PC-3 (cell line): ENCODE measurements at regions of chr6 and their contacts with region 1.

Region 1: DNA sequence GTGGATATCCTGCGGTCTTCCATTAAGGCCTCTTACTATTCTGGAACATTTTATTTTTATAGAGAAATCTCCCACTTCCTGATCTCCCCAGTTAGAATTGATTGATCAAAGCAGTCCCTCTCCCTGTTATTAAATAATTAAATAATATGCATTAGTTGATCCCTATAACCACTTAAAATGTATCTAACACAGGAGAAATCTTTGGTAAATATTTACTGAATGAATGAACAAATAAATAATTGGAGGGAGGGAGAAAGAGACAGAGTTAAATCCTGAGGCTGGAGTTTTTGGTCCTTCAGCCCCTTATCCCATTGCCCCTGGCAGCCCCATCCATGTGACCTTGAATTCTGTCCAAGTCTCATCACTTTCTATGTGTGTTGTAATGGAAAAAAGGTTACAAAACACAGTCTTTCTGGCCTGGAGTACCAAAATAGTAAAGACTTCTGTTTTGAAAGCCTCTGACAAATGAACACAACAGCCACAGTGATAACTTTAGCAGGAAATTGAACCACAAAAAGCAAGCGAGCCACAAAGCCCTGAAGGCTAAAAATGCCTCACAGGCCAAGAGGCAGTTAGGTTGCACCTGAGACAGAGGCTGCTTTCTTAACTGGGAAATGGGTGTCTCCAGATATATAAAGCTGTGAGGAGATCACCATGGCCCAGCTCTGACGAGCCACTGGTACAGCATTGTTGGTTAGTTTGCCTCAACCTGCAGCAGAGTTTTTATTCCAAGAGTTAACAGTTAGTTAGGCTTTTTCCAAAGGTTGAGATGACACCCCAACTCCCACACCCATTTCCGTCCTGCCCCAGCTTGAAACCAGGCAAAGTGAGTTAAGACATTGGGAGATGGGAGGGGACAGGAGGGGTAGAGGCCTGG is 11.3 kb downstream of the NT5E start:
- DNase-seq: peak; percentile 68
- ATAC-seq: no peak
- H3K4me3 ChIP-seq: no peak overlapping the region
- H3K27ac ChIP-seq: peak overlapping the region; percentile 96
- H3K4me1 ChIP-seq: peaks cover 81% of the 10 kb centered on the region
- H3K27me3 ChIP-seq: no peaks in the 10 kb centered on the region
- CTCF ChIP-seq: no peak

Region 2: DNA sequence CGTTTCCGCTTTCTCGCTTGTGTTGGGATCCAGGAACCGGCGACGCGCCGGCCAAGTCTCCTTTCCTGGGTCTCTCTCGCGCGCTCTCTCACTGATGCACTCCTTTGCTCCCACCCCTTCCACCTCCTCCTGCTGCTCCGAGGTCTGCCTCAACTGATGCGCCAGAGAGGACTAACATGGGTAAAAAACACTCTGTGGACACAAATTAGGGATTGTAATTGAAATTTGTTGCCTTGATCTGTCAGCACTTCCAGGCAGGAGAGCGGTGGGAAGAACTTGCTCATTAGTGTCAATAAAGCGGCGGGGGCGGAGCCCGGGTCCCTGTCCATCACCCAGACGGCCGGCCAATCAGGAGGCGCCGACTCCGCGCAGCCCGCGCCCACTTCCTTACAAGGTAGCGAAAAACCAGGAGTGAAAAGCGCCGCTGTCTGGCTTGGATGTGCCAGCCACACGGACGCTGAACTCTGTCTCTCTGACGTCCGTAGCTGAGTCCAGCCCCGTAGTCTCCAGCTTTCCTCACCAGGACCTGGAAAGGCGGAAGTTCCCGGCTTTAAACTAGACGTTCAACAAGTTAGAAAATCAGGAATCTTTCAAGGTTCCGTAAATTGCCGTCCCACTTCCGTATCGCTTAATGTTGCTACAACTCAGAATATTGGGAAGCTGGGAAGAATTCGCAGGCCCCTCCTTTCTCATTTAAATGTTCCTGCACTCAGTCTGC is 696.7 kb before region 1 on chr6 and contains the start of gene TBX18:
- CTCF ChIA-PET with region 1: no interaction called
- POLR2A ChIA-PET with region 1: interaction called, 11 read pairs
- intact Hi-C with region 1: no loop called
- DNase-seq: no peak
- ATAC-seq: no peak
- H3K4me3 ChIP-seq: no peak within 1 kb of the TSS
- H3K27ac ChIP-seq: no peak within 1 kb of the TSS
- H3K4me1 ChIP-seq: no peaks in the 10 kb centered on the region
- H3K27me3 ChIP-seq: peaks cover 77% of the 10 kb centered on the region
- CTCF ChIP-seq: no peak
- total RNA-seq, gene TBX18: not detected in 2 replicates

Region 3: DNA sequence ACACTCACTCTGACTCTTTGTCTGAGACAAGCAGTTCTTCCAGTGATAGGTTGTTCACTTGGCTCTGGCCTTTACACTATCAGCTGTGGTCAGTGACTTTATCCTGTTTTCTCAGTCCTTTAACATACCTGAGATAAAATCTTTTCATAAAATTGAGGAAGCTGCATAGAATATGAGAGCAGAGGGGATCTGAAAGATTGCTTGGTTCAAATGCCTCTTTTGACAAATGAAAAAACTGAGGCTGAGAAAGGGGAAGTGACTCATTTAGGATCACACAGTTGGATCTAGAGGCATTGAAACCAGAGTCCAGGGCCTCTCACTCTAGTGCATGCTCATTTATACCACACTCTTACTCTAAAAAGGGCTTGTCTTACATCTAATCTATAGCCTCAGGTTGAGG is 419.8 kb before region 1 on chr6:
- CTCF ChIA-PET with region 1: no interaction called
- POLR2A ChIA-PET with region 1: no interaction called
- intact Hi-C with region 1: no loop called
- DNase-seq: no peak
- ATAC-seq: no peak
- H3K4me3 ChIP-seq: no peak overlapping the region
- H3K27ac ChIP-seq: no peak overlapping the region
- H3K4me1 ChIP-seq: no peaks in the 10 kb centered on the region
- H3K27me3 ChIP-seq: peaks cover 7% of the 10 kb centered on the region; the same call in 1 of the 2 replicates
- CTCF ChIP-seq: no peak

Region 4: DNA sequence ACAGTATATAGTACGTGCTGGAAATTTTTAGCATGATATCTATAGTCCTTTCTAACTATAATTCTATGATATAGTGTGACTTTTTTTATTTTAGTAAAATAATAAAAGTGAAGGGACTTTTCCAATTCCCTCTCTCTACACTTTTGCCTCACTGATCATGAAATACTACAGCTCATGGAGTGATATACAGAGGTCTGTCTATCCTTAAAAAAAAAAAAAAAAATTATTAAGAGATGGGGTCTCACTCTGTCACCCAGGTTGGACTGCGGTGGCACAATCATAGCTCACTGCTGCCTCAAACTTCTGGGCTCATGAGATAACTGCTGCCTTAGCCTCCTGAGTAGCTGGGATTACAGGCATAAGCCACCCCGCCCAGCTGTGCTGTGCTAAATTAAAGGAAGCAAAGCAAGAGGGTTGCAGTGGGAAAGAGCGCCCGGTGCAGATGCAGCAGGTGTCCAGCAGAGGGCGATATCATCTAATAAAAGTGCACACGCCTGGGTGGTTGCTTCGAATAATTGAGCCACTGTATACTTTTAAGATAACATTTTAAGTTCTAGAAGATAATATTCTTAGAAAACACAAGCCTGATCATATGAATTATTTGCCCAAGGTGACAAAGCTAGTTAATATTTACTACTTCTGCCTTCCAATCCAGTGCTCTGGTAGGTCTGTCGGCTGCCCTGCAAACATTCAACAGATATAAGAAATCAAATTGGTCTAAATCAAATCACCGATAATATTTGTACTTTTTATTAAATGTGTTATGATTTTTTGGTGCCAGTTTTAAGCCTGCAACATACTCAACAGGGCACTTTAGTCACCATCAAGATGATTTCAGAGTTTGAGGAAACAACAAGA is 106.2 kb before region 1 on chr6:
- CTCF ChIA-PET with region 1: no interaction called
- POLR2A ChIA-PET with region 1: interaction called, 3 read pairs
- intact Hi-C with region 1: loop called (anchors 2 kb)
- DNase-seq: peak; percentile 76
- ATAC-seq: peak; percentile 88
- H3K4me3 ChIP-seq: no peak overlapping the region
- H3K27ac ChIP-seq: no peak overlapping the region
- H3K4me1 ChIP-seq: peaks cover 24% of the 10 kb centered on the region
- H3K27me3 ChIP-seq: no peaks in the 10 kb centered on the region
- CTCF ChIP-seq: peak; percentile 82

Region 5: DNA sequence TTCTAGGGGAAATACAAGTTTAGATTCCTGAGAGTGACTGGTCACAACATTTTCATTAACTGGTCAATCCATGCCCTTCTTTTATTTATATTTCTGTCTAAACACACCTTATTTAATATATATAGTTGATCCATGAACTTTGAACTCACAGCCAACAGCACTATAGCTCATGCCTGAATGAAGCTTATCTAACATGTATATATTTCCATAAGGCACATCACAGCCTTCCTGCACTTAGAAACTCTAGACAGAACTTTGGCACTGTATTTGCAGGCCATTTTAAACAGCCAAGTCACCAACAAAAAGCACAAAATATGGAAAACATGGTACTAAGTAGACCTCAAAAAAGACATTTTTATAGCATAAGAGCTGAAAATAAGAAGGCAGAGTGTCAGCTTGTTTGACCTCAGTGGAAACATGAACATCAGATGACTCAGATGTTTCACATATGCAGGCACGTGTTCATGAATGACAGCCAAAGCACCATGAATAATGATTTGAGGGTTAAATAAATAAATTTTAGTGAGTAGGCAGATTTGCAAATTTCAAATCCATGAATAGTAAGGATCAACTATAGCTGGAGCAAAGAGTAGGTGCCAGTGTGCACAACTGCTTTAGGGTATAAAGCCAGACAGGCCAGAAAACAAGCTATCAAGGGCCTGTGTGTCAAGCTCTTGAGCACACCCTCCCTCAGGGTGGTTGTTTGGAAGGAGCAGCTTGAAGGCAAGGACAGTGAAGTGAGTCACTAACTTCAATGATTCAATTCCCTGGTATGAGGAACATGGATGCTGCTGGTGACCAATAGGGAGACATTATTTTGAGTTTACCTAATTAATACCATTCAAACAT is 100.1 kb before region 1 on chr6:
- CTCF ChIA-PET with region 1: no interaction called
- POLR2A ChIA-PET with region 1: interaction called, 5 read pairs
- intact Hi-C with region 1: loop called (anchors 1 kb)
- DNase-seq: peak; percentile 91
- ATAC-seq: peak; percentile 88
- H3K4me3 ChIP-seq: no peak overlapping the region
- H3K27ac ChIP-seq: peak overlapping the region; percentile 82
- H3K4me1 ChIP-seq: peaks cover 51% of the 10 kb centered on the region
- H3K27me3 ChIP-seq: no peaks in the 10 kb centered on the region
- CTCF ChIP-seq: no peak

Region 6: DNA sequence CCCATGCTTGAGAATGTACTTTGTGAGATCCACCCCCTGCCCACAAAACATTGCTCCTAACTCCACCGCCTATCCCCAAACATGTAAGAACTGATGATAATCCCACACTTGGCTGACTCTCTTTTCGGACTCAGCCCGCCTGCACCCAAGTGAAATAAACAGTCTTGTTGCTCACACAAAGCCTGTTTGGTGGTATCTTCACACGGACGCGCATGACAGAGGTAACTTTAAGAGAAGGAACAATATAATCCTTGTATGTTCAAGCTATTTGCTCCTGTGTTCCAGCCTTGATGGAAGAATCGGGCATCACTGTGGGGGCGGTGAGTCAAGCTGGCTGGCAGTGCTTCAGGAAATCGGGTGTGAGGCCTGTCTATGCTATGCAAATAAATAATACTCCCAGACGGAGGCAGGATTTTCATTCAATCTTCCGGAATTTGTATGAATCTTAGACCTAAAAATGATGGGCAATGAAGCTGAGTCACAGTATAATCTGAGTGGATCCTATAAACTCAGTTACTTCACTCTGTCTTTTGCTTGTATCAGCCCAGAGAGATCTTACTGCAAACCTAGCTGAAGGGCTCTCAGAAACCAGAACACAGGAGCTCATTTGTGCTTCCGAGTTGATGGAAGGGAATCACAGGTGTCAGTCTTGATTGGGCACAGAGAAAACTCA is 56.5 kb before region 1 on chr6:
- CTCF ChIA-PET with region 1: no interaction called
- POLR2A ChIA-PET with region 1: interaction called, 3 read pairs
- intact Hi-C with region 1: loop called (anchors 1 kb)
- DNase-seq: peak; percentile 94
- ATAC-seq: peak; percentile 74
- H3K4me3 ChIP-seq: peak overlapping the region; percentile 45; the same call in 1 of the 2 replicates
- H3K27ac ChIP-seq: peak overlapping the region; percentile 95
- H3K4me1 ChIP-seq: peaks cover 48% of the 10 kb centered on the region
- H3K27me3 ChIP-seq: no peaks in the 10 kb centered on the region
- CTCF ChIP-seq: no peak

Region 7: DNA sequence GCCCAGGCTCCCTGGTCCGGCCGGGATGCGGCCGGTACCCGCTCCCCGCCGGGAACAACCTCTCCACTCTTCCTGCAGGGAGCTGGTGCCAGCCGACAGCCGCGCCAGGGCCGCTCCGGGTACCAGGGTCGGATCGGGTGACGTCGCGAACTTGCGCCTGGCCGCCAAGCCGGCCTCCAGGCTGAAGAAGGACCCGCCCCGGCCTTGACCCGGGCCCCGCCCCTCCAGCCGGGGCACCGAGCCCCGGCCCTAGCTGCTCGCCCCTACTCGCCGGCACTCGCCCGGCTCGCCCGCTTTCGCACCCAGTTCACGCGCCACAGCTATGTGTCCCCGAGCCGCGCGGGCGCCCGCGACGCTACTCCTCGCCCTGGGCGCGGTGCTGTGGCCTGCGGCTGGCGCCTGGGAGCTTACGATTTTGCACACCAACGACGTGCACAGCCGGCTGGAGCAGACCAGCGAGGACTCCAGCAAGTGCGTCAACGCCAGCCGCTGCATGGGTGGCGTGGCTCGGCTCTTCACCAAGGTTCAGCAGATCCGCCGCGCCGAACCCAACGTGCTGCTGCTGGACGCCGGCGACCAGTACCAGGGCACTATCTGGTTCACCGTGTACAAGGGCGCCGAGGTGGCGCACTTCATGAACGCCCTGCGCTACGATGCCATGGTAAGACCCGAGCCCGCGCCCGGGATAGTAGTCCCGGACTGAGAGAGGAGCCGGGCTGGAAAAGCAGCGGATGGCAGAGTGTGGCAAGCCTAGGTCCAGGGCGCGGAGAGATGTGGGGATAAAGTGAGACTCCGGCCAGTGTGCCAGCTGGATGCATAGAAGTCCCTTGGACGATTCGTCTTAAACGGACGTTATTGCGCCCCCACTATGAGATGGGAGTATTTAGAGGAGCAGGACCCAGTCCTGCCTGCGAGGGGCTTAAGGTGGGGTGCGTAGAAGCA is 11.1 kb before region 1 on chr6 and contains the start of gene NT5E:
- CTCF ChIA-PET with region 1: interaction called, 7 read pairs
- POLR2A ChIA-PET with region 1: interaction called, 30 read pairs
- intact Hi-C with region 1: loop called (anchors 1 kb)
- DNase-seq: peak; percentile 65
- ATAC-seq: peak; percentile 79
- H3K4me3 ChIP-seq: peak within 1 kb of the TSS; percentile 87
- H3K27ac ChIP-seq: peak within 1 kb of the TSS; percentile 66
- H3K4me1 ChIP-seq: peaks cover 29% of the 10 kb centered on the region
- H3K27me3 ChIP-seq: no peaks in the 10 kb centered on the region
- CTCF ChIP-seq: peak; percentile 31; the same call in 1 of the 2 replicates
- total RNA-seq, gene NT5E: 9.0 and 15.8 TPM in 2 replicates

Region 8: GRCh38 chr6:85482905-85483700 is 21.9 kb after region 1 on chr6:
- CTCF ChIA-PET with region 1: interaction called, 21 read pairs
- POLR2A ChIA-PET with region 1: no interaction called
- intact Hi-C with region 1: no loop called
- DNase-seq: peak; percentile 85
- ATAC-seq: peak; percentile 85
- H3K4me3 ChIP-seq: no peak overlapping the region
- H3K27ac ChIP-seq: 0 out of 2 replicates have a peak overlapping the region, but pooled peaks have one; percentile 11
- H3K4me1 ChIP-seq: 0 out of 2 replicates have a peak, but pooled peaks cover 5% of the 10 kb centered on the region
- H3K27me3 ChIP-seq: no peaks in the 10 kb centered on the region
- CTCF ChIP-seq: peak; percentile 96

Region 9: DNA sequence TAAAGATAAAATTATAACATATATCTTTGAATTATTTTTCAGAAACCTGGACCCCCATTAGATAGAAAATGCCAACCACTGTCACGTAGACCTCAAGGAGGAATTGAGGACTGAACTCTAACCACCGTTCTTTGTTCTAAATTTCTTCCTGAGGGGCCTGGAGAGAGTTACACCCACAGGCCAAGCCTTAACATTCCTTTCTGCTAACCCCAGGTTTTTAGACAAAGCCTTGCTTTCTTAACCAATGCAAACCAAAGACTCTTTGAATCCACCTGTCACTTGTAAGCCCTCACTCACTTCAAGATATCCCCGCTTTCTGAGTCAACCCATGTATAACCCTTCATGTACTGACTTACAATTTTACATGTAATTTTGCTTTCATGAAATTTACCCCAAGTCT is 91.5 kb after region 1 on chr6:
- CTCF ChIA-PET with region 1: no interaction called
- POLR2A ChIA-PET with region 1: no interaction called
- intact Hi-C with region 1: no loop called
- DNase-seq: no peak
- ATAC-seq: no peak
- H3K4me3 ChIP-seq: no peak overlapping the region
- H3K27ac ChIP-seq: no peak overlapping the region
- H3K4me1 ChIP-seq: no peaks in the 10 kb centered on the region
- H3K27me3 ChIP-seq: no peaks in the 10 kb centered on the region
- CTCF ChIP-seq: no peak